Transverse colon (tissue), 4 donors: ENCODE measurements at regions of chr7 and their contacts with region 1.

Region 1: DNA sequence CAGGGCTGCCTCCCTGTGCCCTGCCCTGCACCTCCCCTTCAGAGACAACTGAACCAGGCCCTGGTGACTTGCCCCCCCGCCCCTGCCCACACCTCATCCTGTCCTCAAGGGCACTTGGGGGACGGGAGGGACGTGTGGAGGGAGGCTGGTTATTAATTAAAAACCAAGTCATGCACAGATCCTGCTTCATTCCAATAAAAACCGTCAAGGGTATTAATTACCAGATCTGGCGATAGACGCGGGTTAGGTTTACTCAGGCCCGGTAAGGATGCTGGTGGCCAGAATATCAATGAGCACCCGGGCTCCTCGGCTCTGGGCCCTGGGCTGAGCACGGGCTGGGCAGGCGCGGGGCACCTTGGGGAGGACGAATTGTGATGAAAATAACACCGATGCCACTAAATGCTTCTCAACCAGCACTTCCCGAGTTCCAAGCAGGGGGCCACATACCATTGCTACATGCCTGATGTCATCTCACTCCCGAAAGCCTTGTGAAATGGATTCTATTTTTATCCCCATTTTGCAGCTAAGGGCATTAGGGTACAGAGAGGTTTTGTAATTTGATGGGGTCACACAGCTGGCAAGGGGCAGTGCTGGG is 24.5 kb upstream of the GTF2IRD1 start:
- DNase-seq: no peak
- H3K4me3 ChIP-seq: no peak overlapping the region
- H3K27ac ChIP-seq: no peak overlapping the region
- H3K4me1 ChIP-seq: no peaks in the 10 kb centered on the region
- H3K27me3 ChIP-seq: no peaks in the 10 kb centered on the region
- CTCF ChIP-seq: no peak
- EP300 ChIP-seq: no peak
- POLR2A ChIP-seq: no peak

Region 2: DNA sequence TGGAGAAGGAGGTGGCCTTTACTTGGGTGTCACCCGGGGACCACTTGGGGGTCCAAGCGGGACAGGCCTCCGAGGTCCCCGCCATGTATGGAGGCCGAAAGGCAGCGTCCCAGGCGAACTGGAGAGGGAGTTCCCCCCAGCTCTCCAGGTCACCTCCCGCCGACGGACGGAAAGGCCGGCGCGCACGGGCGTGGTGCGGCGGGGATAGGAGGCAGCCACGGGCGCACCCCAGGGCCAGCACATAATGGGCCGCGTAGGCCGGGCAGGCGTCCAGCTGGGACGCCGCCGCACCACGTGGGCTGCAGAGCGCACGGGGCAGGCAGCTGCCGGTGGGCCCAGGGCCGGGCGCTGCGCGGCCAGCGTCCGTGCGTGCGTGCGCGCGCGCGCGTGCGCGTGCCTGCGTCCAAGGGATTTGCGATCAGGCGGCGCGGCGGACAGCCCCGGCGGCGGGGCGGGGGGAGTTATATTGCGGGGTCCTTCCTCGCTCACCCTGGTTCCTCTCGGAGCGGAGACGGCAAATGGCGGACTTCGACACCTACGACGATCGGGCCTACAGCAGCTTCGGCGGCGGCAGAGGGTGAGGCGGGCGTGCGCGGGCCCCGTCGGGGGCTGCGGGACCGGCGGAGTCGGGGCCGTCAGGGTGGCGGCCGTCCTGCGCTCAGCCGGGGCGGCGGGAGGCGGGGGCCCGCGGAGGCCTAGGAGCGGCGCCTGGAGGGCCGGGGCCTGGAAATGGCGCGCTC is 255.2 kb before region 1 on chr7 and contains the start of gene EIF4H:
- in situ Hi-C with region 1: no loop called
- intact Hi-C with region 1: no loop called
- DNase-seq: peak; percentile 98
- H3K4me3 ChIP-seq: peak within 1 kb of the TSS; percentile 73 to 98 (median 90)
- H3K27ac ChIP-seq: peak within 1 kb of the TSS; percentile 95 to 98 (median 97)
- H3K4me1 ChIP-seq: peaks cover 27 to 57% (median 48%) of the 10 kb centered on the region in 4 donors
- H3K27me3 ChIP-seq: no peaks in the 10 kb centered on the region
- CTCF ChIP-seq: no peak
- EP300 ChIP-seq: no peak
- POLR2A ChIP-seq: peak; percentile 80
- total RNA-seq, gene EIF4H: 175 to 250 (median 213) TPM

Region 3: GRCh38 chr7:74554178-74554577 is 124.9 kb after region 1 on chr7:
- in situ Hi-C with region 1: loop called in 2 of 4 experiments (anchors 10 to 25 kb)
- intact Hi-C with region 1: no loop called
- DNase-seq: no peak
- H3K4me3 ChIP-seq: no peak overlapping the region
- H3K27ac ChIP-seq: no peak overlapping the region
- H3K4me1 ChIP-seq: no peaks in the 10 kb centered on the region
- H3K27me3 ChIP-seq: no peaks in the 10 kb centered on the region
- CTCF ChIP-seq: no peak
- EP300 ChIP-seq: no peak
- POLR2A ChIP-seq: no peak